WTC11 (cell line): ENCODE measurements at regions of chr16 and their contacts with region 1.

Region 1: GRCh38 chr16:62846399-62847057 is 810.3 kb upstream of the CDH8 start:
- DNase-seq: no peak
- ATAC-seq: no peak
- H3K4me3 Mint-ChIP-seq: no peak overlapping the region
- H3K27ac Mint-ChIP-seq: no peak overlapping the region
- H3K4me1 Mint-ChIP-seq: peaks cover 5% of the 10 kb centered on the region; the same call in 1 of the 2 replicates
- H3K27me3 Mint-ChIP-seq: no peaks in the 10 kb centered on the region; the same call in 1 of the 2 replicates
- CTCF ChIP-seq: no peak

Region 2: DNA sequence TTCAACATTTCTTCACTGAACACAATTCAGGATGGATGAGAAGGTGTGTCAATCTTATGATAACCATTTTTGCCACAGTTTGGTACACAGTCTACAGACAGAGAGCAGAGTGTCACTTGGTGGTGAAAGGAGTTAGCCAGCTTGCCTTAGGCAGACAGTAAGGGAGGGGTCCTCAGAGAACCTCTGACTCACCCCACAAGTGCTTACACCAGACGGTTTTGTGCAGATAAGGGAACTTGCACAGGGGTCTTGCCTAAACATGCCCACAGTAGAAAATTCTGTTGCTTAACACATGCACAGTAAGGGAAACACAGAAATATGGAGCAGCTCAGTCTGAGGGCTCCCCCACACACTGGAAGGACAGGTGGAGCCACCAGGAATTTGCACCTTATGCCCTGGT is 605.8 kb before region 1 on chr16:
- CTCF ChIA-PET with region 1: no interaction called
- POLR2A ChIA-PET with region 1: interaction called, 13 read pairs
- DNase-seq: no peak
- ATAC-seq: peak; percentile 58
- H3K4me3 Mint-ChIP-seq: no peak overlapping the region
- H3K27ac Mint-ChIP-seq: peak overlapping the region; percentile 13
- H3K4me1 Mint-ChIP-seq: peaks cover 30% of the 10 kb centered on the region
- H3K27me3 Mint-ChIP-seq: no peaks in the 10 kb centered on the region
- CTCF ChIP-seq: no peak

Region 3: DNA sequence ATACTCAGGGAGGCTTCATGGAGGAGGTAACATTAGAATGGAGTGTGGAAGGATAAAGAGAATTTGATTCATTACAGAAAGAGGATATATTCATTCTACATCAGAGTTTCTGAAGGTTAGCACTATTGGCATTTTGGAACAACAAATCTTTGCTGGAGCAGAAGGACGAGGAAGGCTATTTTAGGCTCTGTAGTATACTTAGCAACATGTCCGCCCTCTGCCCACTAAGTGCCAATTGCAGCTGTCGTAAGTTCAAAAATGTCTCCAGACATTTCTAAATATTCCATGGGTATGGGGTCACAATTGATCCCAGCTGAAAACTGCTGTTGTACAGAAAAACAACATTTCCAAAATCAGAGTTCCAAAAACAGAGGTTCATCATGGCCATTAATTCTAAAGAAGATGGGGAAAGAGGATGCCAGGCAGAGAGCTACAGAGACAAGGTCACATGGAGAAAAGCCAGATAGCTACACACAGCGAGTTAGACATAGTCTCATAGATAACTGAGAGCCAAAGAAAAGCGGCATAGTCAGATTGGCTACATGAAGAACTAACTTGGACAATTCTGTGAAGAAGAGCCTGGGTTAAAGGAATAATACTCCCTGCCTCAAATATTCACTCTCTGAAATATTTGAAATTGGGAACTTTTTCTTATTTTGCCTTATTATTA is 36.2 kb after region 1 on chr16:
- CTCF ChIA-PET with region 1: no interaction called
- POLR2A ChIA-PET with region 1: no interaction called
- DNase-seq: no peak
- ATAC-seq: no peak
- H3K4me3 Mint-ChIP-seq: no peak overlapping the region
- H3K27ac Mint-ChIP-seq: no peak overlapping the region
- H3K4me1 Mint-ChIP-seq: no peaks in the 10 kb centered on the region
- H3K27me3 Mint-ChIP-seq: no peaks in the 10 kb centered on the region
- CTCF ChIP-seq: no peak

Region 4: DNA sequence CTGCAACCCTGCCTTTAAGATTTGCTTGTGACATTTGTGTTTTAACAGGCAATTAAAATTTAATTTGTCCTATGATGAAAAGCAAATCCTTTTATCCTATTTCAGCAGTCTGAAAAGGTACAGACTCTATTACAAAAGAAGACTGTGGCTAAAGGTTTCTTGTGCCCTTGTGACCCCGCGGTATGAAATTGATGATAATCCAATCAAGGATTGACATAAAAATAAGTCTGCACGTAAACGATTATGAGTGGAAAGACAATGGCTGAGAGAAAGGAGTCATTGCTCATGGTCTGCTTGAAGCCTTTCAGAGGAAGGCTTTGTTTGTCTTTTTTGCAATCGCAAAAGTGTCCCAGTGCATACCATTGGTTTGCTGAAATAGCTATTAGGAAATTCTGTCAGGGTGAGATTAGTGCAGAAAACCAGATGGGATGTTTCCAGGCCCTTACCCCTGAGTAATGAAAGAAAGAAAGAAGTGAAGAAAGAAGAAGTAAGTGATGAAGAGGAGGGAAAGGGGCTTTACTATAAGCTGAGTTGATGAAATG is 57.5 kb after region 1 on chr16:
- CTCF ChIA-PET with region 1: no interaction called
- POLR2A ChIA-PET with region 1: no interaction called
- DNase-seq: no peak
- ATAC-seq: no peak
- H3K4me3 Mint-ChIP-seq: no peak overlapping the region
- H3K27ac Mint-ChIP-seq: no peak overlapping the region
- H3K4me1 Mint-ChIP-seq: no peaks in the 10 kb centered on the region
- H3K27me3 Mint-ChIP-seq: no peaks in the 10 kb centered on the region
- CTCF ChIP-seq: no peak